Activated CD4-positive, alpha-beta T cell treated with anti-CD3 and anti-CD28 coated beads, Interleukin-2, amount 10 ng/mL, durations not matched to agents 24 days and 14 days (primary cell): ENCODE measurements at regions of chr9 and their contacts with region 1.

Region 1: GRCh38 chr9:73081979-73082657 is 69.5 kb upstream of the ANXA1 start:
- DNase-seq: no peak
- H3K4me3 Mint-ChIP-seq: no peak overlapping the region
- H3K27ac Mint-ChIP-seq: no peak overlapping the region
- H3K4me1 Mint-ChIP-seq: no peaks in the 10 kb centered on the region
- H3K27me3 Mint-ChIP-seq: peaks cover 19% of the 10 kb centered on the region

Region 2: GRCh38 chr9:72038890-72039410 is 1043.2 kb before region 1 on chr9:
- intact Hi-C with region 1: loop called (anchors 5 kb)
- DNase-seq: peak; percentile 89
- H3K4me3 Mint-ChIP-seq: no peak overlapping the region
- H3K27ac Mint-ChIP-seq: no peak overlapping the region
- H3K4me1 Mint-ChIP-seq: peaks cover 4% of the 10 kb centered on the region
- H3K27me3 Mint-ChIP-seq: peaks cover 22% of the 10 kb centered on the region

Region 3: DNA sequence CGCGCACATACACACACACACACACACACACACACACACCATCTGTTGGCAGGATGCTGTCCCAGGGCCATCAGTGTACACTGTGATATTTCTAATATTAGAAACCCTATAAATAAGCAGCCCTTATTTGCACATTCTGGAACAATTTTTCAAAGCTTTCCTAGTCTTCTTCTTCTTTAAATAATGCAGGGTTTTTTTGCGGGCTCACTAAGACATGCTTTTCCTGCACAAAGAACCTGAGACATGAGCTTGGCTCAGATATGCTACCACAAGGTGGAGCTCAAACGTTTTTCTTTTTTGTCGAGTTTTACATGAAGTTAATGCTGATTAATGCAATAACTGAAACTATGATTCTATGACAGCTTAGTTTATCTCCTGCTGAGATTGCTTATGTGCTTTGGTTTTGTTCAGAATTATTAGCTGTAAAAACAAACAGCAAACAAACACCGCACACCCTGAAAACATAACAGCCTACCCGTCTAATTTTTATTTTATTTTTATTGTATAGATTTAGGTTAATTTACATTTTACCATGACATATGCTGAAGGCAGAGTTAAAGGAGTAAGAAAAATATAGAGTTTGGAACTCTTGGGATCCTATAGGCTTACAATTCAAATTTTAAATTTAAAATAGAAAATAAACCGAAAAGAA is 225.0 kb before region 1 on chr9:
- intact Hi-C with region 1: loop called (anchors 5 kb)
- DNase-seq: no peak
- H3K4me3 Mint-ChIP-seq: no peak overlapping the region
- H3K27ac Mint-ChIP-seq: no peak overlapping the region
- H3K4me1 Mint-ChIP-seq: no peaks in the 10 kb centered on the region
- H3K27me3 Mint-ChIP-seq: no peaks in the 10 kb centered on the region

Region 4: DNA sequence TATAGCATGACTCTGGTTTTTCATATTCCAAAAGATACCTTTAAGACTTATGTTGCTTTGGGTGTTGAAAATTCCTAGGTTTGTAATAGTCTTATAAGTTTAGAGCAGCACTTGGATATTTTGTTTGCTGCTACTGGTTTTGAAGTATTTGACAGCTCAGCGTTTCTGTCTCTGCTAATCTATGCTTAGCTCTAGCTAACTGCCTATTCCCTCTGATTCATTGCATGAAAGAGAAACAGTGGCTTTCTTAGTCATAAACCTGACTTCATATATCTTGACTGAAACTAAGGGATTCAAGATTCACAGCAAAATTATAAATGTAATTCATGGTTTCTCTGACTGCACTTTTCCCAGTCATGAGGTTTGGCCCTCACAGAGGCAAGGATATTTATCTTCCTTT is 33.9 kb after region 1 on chr9:
- intact Hi-C with region 1: no loop called
- DNase-seq: no peak
- H3K4me3 Mint-ChIP-seq: no peak overlapping the region
- H3K27ac Mint-ChIP-seq: no peak overlapping the region
- H3K4me1 Mint-ChIP-seq: peaks cover 28% of the 10 kb centered on the region
- H3K27me3 Mint-ChIP-seq: peaks cover 2% of the 10 kb centered on the region